CD4-positive, alpha-beta T cell (primary cell): ENCODE measurements at regions of chr2 and their contacts with region 1.

Region 1: GRCh38 chr2:32553829-32554432 is 73.9 kb upstream of the TTC27 start:
- DNase-seq: peak in 3 of 14 experiments; percentile 47 to 60 (median 58)
- ATAC-seq: peak; percentile 61
- H3K4me3 ChIP-seq: no peak overlapping the region
- H3K4me3 Mint-ChIP-seq: no peak overlapping the region
- H3K27ac ChIP-seq: no peak overlapping the region
- H3K27ac Mint-ChIP-seq: no peak overlapping the region
- H3K4me1 ChIP-seq: no peaks in the 10 kb centered on the region
- H3K4me1 Mint-ChIP-seq: no peaks in the 10 kb centered on the region
- H3K27me3 ChIP-seq: no peaks in the 10 kb centered on the region
- H3K27me3 Mint-ChIP-seq: no peaks in the 10 kb centered on the region
- CTCF ChIP-seq: peak; percentile 77

Region 2: DNA sequence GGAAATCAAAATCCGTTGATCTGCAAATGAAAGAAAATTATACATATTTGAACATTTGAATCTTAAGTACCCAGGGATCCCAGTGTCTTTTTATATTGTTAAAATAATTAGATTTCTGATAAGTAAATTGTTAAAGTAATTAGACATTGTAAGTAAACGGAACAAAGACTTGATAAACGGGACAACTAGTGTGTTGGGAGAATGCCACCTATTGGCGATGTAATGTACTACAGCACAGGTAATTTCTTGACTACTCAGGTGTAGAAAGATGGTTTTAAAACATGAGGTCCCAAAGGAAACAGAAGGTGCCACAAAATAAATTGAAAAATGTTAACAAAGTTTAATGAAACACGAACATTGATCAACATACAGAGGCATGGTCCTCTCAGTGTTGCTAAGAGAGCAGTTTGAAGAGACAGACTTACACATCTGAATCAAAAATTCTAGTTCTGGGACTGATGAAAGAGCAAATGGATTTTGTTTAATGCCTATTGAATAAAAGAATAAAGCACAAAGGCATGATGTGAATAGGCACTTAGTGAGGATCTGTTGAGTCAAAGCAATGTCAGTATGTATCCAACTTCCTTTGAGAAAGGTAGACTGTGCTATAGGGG is 819.1 kb after region 1 on chr2:
- CTCF ChIA-PET with region 1: no interaction called
- POLR2A ChIA-PET with region 1: no interaction called
- intact Hi-C with region 1: loop called in 1 of 2 experiments (anchors 2 kb)
- DNase-seq: peak in 5 of 14 experiments; percentile 5 to 66 (median 46)
- ATAC-seq: no peak
- H3K4me3 ChIP-seq: no peak overlapping the region
- H3K4me3 Mint-ChIP-seq: no peak overlapping the region
- H3K27ac ChIP-seq: no peak overlapping the region
- H3K27ac Mint-ChIP-seq: no peak overlapping the region
- H3K4me1 ChIP-seq: no peaks in the 10 kb centered on the region
- H3K4me1 Mint-ChIP-seq: no peaks in the 10 kb centered on the region
- H3K27me3 ChIP-seq: no peaks in the 10 kb centered on the region
- H3K27me3 Mint-ChIP-seq: no peaks in the 10 kb centered on the region
- CTCF ChIP-seq: peak; percentile 69